ENCODE measurements at regions of chr2 and their contacts with region 1.

Region 1: GRCh38 chr2:11829947-11830707 is 83.7 kb downstream of the LPIN1 start:
- DNase-seq: peak; percentile 85 to 99
- H3K4me3 ChIP-seq: peak overlapping the region; percentile 44
- H3K27ac ChIP-seq: peak overlapping the region; percentile 97
- H3K4me1 ChIP-seq: peaks cover 36% of the 10 kb centered on the region
- H3K27me3 ChIP-seq: no peaks in the 10 kb centered on the region
- CTCF ChIP-seq: peak; percentile 56; the same call in 1 of the 2 replicates

Region 2: DNA sequence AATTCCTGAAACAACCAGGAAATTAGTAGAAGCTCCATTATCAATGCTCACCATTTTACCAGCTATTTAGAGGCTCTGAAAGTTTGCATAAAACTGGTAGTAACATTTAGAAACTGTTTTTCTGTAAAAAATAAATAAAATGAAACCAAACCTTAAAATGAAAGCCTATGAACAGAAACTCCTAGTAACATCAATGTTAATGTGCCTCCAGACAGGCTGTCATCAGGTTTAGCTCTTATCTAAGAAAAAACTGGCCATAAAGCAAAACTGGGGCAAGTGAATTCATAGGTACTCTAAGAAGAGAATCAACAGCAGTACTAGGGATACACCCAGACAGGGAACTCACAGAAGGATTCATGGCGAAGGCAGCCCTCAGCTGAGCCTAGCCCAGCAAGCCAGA is 372.2 kb before region 1 on chr2:
- CTCF ChIA-PET with region 1: no interaction called
- POLR2A ChIA-PET with region 1: no interaction called
- intact Hi-C with region 1: no loop called
- DNase-seq: no peak
- H3K4me3 ChIP-seq: no peak overlapping the region
- H3K27ac ChIP-seq: no peak overlapping the region
- H3K4me1 ChIP-seq: 0 out of 2 replicates have a peak, but pooled peaks cover 2% of the 10 kb centered on the region
- H3K27me3 ChIP-seq: no peaks in the 10 kb centered on the region
- CTCF ChIP-seq: no peak

Region 3: DNA sequence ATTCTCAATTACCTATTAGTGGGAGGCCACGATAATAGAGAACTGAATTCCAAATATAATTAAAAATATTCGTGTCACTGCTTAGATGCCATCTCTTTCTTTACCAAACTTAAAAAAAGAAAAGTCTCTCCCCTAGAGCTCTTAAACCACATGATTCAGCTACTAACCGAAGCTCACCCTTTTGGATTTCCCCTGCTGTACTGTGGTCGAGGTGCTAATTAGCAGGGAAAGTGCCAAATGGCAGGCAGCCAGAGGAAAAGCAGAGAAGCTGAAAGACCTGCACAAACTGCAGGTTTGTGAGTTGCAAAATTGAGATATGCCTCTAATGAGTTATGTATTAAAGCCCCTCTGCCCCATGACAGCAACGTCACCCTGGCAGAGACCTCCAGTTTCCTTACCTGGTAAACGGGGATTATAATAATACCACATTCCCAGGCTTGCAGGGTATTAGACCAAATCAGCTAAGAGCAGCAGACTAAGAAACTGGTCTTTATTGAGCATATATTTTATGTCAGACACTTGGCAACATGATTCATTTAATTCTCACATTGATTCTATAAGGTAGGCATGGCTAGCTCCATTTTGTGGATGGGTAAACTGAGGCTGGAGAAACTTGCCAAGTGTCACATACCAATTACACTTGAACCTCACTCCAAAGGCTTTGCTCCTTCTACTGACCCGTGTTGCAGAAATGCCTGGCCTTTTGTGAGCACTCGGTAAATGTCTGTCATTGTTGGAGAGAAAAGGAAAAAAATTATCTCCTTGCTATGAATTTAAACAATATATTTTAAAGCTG is 176.0 kb after region 1 on chr2:
- CTCF ChIA-PET with region 1: no interaction called
- POLR2A ChIA-PET with region 1: no interaction called
- intact Hi-C with region 1: loop called (anchors 1 kb)
- DNase-seq: peak; percentile 55 to 60
- H3K4me3 ChIP-seq: no peak overlapping the region
- H3K27ac ChIP-seq: no peak overlapping the region
- H3K4me1 ChIP-seq: peaks cover 40% of the 10 kb centered on the region
- H3K27me3 ChIP-seq: no peaks in the 10 kb centered on the region
- CTCF ChIP-seq: no peak

Region 4: GRCh38 chr2:12155303-12156051 is 325.4 kb after region 1 on chr2:
- CTCF ChIA-PET with region 1: no interaction called
- POLR2A ChIA-PET with region 1: no interaction called
- intact Hi-C with region 1: loop called (anchors 10 kb)
- DNase-seq: peak; percentile 58 to 86
- H3K4me3 ChIP-seq: no peak overlapping the region
- H3K27ac ChIP-seq: peak overlapping the region; percentile 79
- H3K4me1 ChIP-seq: peaks cover 36% of the 10 kb centered on the region
- H3K27me3 ChIP-seq: no peaks in the 10 kb centered on the region
- CTCF ChIP-seq: no peak

Region 5: DNA sequence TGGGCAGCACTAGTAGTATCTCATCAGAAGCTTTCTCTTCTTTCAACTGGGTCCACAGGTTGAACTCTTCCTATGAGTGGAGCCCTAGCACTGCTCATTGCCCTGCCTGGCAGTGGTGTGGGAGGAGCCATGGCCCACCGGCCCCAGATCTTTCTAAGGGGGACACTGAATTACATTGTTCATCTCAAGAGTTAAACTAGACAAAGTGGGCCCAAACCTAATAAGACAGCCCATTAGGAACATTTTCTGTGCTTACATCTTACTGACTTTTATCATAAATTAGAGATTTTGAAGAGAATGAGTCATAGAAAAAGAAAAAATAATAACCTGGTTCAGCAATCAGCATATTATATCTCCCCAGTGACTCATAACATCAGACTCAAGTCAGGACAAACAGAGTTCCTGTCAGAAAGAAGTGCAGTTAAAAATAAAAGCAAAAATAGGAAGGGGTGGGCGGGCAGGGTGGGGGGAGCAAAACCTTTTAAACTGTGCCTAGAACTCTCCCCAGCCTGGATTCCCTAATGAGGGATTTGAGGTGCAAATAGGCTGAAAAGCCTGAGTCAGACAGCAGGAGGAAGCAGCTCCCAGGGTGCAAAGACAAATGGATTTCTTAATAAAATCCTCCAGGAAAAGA is 725.0 kb after region 1 on chr2:
- CTCF ChIA-PET with region 1: interaction called, 3 read pairs
- POLR2A ChIA-PET with region 1: no interaction called
- intact Hi-C with region 1: loop called (anchors 10 kb)
- DNase-seq: peak; percentile 18 to 70
- H3K4me3 ChIP-seq: no peak overlapping the region
- H3K27ac ChIP-seq: 0 out of 2 replicates have a peak overlapping the region, but pooled peaks have one; percentile 4
- H3K4me1 ChIP-seq: peaks cover 20% of the 10 kb centered on the region
- H3K27me3 ChIP-seq: no peaks in the 10 kb centered on the region
- CTCF ChIP-seq: no peak

Region 6: GRCh38 chr2:12884713-12885282 is 1054.7 kb after region 1 on chr2:
- CTCF ChIA-PET with region 1: no interaction called
- POLR2A ChIA-PET with region 1: no interaction called
- intact Hi-C with region 1: loop called (anchors 1 kb)
- DNase-seq: peak; percentile 72 to 99
- H3K4me3 ChIP-seq: no peak overlapping the region; the same call in 1 of the 2 replicates
- H3K27ac ChIP-seq: peak overlapping the region; percentile 91
- H3K4me1 ChIP-seq: peaks cover 37% of the 10 kb centered on the region
- H3K27me3 ChIP-seq: no peaks in the 10 kb centered on the region
- CTCF ChIP-seq: no peak

Region 7: GRCh38 chr2:12931186-12931844 is 1101.2 kb after region 1 on chr2:
- CTCF ChIA-PET with region 1: interaction called, 3 read pairs
- POLR2A ChIA-PET with region 1: no interaction called
- intact Hi-C with region 1: loop called (anchors 1 kb)
- DNase-seq: peak in 1 of 2 experiments; percentile 53
- H3K4me3 ChIP-seq: no peak overlapping the region
- H3K27ac ChIP-seq: peak overlapping the region; percentile 85
- H3K4me1 ChIP-seq: peaks cover 35% of the 10 kb centered on the region
- H3K27me3 ChIP-seq: no peaks in the 10 kb centered on the region
- CTCF ChIP-seq: peak; percentile 80

Region 8: GRCh38 chr2:13006829-13007717 is 1176.9 kb after region 1 on chr2:
- CTCF ChIA-PET with region 1: interaction called, 9 read pairs
- POLR2A ChIA-PET with region 1: no interaction called
- intact Hi-C with region 1: loop called (anchors 1 kb)
- DNase-seq: peak; percentile 56 to 61
- H3K4me3 ChIP-seq: no peak overlapping the region
- H3K27ac ChIP-seq: no peak overlapping the region
- H3K4me1 ChIP-seq: peaks cover 9% of the 10 kb centered on the region; the same call in 1 of the 2 replicates
- H3K27me3 ChIP-seq: no peaks in the 10 kb centered on the region
- CTCF ChIP-seq: peak; percentile 98

Measured in PC-9 (cell line).